PC-9 (cell line): ENCODE measurements at regions of chr19 and their contacts with region 1.

Region 1: DNA sequence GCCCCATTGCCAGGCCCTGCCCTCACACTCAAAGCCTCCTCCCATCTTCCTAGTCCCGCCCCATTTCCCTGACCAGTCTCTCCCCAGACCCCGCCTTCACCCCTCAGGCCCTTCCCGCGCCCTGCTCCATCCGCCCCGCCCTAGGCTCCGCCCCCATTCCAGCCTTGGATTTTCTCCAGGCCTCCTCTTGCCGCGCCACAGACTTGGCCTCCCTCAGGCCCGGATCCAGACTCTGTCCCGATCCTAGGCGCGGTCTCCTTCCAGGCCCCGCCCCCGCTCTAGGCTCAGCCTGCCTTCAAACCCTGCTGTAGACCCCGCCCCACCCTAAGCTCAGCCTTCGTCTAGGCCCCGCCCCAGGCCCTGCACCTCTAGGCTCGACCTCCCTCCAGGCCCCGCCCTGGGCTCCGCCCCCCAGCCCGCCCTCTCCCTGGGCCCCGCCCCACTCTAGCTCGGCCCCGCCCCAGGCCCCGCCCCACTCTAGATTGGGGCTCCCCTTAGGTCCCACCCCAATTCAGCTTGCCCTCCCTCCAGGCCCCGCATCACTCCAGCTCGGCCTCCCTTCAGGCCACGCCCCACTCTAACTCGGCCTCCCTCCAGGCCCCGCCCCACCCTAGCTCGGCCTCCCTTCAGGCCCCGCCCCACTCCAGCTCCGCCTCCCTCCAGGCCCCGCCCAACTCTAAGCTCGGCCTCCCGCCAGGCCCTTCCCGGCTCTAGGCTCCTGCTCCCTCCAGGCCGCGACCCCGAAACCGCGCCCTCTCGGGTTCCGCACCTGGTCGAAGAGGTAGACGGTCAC is 18.5 kb downstream of the LMTK3 start:
- DNase-seq: peak; percentile 95 to 99
- H3K4me3 ChIP-seq: peak overlapping the region; percentile 77; the same call in 1 of the 2 replicates
- H3K27ac ChIP-seq: peak overlapping the region; percentile 62
- H3K4me1 ChIP-seq: peaks cover 39% of the 10 kb centered on the region
- H3K27me3 ChIP-seq: no peaks in the 10 kb centered on the region
- CTCF ChIP-seq: no peak

Region 2: DNA sequence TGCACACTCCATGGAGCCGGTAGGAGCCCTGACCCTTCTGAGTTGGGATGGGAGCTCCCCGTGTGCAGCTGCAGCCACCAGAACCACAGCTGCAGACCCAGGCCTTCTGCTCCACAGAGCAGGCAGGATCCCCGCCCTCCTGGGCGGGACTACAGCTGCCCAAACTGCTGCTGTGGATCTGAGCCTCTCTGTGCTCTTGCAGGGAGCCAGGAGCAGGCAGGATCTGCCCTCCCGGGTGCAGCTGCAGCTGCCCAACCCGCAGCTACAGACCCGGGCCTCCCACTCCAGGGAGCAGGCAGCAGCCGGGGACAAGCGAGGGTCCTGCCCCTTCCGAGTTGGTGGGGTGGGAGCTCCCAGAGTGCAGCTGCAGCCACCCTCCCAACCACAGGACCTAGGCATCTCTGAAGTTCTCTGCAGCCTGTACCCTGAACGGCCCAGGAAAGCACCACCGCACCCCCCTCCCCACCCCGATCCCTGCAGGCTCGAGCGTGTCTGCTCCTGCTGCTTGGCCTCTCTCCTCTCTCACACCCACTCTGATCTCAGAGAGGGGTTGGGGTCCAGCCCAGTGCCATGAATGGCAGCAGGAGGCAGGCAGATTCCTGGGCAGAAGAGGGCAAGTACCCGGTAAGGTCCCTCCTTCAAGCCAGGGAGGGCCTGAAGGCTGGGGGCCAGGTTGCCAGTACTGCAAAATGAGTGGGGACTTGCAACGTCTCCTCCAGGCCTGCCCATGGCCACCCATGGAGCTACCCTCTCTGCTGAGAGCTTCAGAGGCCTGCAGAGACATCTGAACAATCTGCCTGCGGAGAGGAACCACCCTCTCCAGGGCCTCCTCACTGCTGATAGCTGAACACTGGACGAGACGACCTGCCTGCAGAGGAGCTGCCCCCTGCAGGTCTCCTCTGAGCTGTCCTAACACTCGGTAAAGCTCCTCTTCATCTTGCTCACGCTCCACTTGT is 184.2 kb before region 1 on chr19:
- CTCF ChIA-PET with region 1: interaction called, 11 read pairs
- POLR2A ChIA-PET with region 1: interaction called, 4 read pairs
- intact Hi-C with region 1: no loop called
- DNase-seq: no peak
- H3K4me3 ChIP-seq: no peak overlapping the region
- H3K27ac ChIP-seq: no peak overlapping the region
- H3K4me1 ChIP-seq: no peaks in the 10 kb centered on the region
- H3K27me3 ChIP-seq: peaks cover 14% of the 10 kb centered on the region; the same call in 1 of the 2 replicates
- CTCF ChIP-seq: peak; percentile 37; the same call in 1 of the 2 replicates

Region 3: DNA sequence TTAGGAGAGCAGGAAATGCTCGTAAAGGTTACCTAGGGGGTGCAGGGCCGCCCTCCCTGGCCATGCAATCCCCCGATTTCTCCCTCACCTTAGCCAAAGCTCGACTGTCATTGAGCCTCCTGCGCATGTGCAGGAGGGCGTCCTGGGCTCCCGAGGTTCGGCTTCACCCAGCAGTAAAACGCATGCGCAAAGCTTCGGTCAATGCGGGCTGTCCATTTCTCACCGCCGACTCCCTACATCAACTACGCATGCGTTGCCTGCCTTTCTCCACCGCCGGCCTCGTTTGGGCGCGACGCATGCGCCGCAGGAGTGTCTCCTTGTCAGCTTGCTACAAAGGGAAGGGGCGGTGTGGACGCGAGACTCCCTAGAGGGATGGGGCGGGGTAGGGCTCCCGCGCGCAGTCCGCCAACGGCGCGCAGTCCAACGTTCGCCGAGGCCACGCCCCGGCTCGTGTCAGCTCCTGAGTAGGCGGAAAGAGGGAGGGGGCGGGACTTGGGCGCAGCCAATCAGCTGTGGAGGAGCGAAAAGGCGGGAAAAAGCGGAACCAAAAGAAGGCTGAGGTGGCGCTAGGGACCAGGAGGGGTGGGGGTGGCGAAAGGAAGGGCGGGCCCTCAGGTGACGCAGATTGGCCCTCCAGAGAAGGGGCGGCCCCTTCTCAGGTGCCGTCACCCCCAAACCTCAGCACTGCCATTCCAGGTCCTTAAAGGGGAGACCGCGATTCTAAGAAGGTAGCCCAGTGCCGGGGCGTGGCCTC is 129.1 kb before region 1 on chr19 and contains the starts of genes SYNGR4 and TMEM143:
- CTCF ChIA-PET with region 1: no interaction called
- POLR2A ChIA-PET with region 1: interaction called, 11 read pairs
- intact Hi-C with region 1: no loop called
- DNase-seq: peak; percentile 99 to 100
- H3K4me3 ChIP-seq: peak within 1 kb of the TSS; percentile 72
- H3K27ac ChIP-seq: peak within 1 kb of the TSS; percentile 63
- H3K4me1 ChIP-seq: peaks cover 7% of the 10 kb centered on the region
- H3K27me3 ChIP-seq: no peaks in the 10 kb centered on the region
- CTCF ChIP-seq: no peak
- total RNA-seq, gene SYNGR4: 1.3 and 2.1 TPM in 2 replicates
- total RNA-seq, gene TMEM143: 24.8 and 31.3 TPM in 2 replicates

Region 4: GRCh38 chr19:48543121-48544056 is 50.3 kb after region 1 on chr19:
- CTCF ChIA-PET with region 1: no interaction called
- POLR2A ChIA-PET with region 1: interaction called, 16 read pairs
- intact Hi-C with region 1: no loop called
- DNase-seq: peak; percentile 96
- H3K4me3 ChIP-seq: peak overlapping the region; percentile 34; the same call in 1 of the 2 replicates
- H3K27ac ChIP-seq: peak overlapping the region; percentile 58
- H3K4me1 ChIP-seq: peaks cover 24% of the 10 kb centered on the region
- H3K27me3 ChIP-seq: no peaks in the 10 kb centered on the region
- CTCF ChIP-seq: no peak

Region 5: GRCh38 chr19:48618916-48619691 is 126.0 kb after region 1 on chr19 and contains the starts of genes RPL18 and SPHK2:
- CTCF ChIA-PET with region 1: no interaction called
- POLR2A ChIA-PET with region 1: interaction called, 13 read pairs
- intact Hi-C with region 1: no loop called
- DNase-seq: peak; percentile 97 to 99
- H3K4me3 ChIP-seq: peak within 1 kb of the TSS; percentile 92
- H3K27ac ChIP-seq: peak within 1 kb of the TSS; percentile 91
- H3K4me1 ChIP-seq: peaks cover 42% of the 10 kb centered on the region
- H3K27me3 ChIP-seq: no peaks in the 10 kb centered on the region
- CTCF ChIP-seq: no peak
- total RNA-seq, gene RPL18: 1,618 and 1,710 TPM in 2 replicates
- total RNA-seq, gene SPHK2: 18.4 and 20.0 TPM in 2 replicates